Cardiac septum (tissue), 1 donor: ENCODE measurements at regions of chrX and their contacts with region 1.

Region 1: GRCh38 chrX:108304210-108304609 is 134.0 kb downstream of the COL4A6 start:
- DNase-seq: no peak

Region 2: DNA sequence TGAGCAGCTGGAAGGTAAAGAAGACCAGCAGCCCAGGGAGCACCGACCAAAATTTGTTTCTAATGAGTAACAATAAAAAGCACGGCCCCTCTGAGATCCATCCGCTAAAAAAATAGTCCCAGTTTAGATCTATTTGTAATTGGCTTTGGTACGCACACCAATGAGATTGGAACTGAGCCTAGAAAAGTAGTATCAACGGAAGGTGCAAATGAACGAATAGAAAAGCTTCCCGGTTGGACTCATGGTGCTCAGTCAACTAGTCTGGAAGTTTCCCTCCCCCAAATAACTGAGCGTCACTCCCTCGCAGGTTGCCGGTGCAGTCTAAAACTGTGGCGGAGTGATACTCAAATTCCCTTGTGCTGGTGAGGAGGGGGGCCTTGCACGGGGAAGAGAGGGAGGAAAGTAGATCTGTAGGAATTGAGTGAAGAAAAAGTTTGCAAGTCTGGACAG is 135.2 kb after region 1 on chrX and contains the start of gene COL4A5:
- intact Hi-C with region 1: loop called (anchors 10 kb)
- DNase-seq: no peak
- total RNA-seq, gene COL4A5: 14.0 TPM